Activated CD4-positive, alpha-beta memory T cell treated with anti-CD3 and anti-CD28 coated beads for 36 hours (primary cell): ENCODE measurements at regions of chr1 and their contacts with region 1.

Region 1: DNA sequence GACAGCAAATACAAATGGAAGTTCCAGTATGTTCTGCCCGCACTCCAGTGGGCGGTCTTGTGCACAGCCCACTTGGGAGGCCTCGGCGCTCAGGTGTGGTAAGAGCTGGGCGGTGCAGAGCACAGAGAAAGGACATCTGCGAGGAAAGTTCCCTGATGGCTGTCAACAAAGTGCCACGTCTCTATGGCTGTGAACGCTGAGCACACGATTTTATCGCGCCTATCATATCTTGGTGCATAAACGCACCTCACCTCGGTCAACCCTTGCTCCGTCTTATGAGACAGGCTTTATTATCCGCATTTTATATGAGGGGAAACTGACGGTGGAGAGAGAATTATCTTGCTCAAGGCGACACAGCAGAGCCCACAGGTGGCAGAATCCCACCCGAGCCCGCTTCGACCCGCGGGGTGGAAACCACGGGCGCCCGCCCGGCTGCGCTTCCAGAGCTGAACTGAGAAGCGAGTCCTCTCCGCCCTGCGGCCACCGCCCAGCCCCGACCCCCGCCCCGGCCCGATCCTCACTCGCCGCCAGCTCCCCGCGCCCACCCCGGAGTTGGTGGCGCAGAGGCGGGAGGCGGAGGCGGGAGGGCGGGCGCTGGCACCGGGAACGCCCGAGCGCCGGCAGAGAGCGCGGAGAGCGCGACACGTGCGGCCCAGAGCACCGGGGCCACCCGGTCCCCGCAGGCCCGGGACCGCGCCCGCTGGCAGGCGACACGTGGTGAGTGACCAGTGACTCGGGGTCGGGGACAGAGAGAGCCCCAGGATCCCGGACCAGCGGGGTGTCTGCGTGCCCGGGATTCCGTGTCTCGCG is at the start of gene IL12RB2:
- DNase-seq: peak; percentile 75
- H3K4me3 Mint-ChIP-seq: peak within 1 kb of the TSS; percentile 95
- H3K27ac Mint-ChIP-seq: peak within 1 kb of the TSS; percentile 96
- H3K4me1 Mint-ChIP-seq: peaks cover 52% of the 10 kb centered on the region
- H3K27me3 Mint-ChIP-seq: peaks cover 2% of the 10 kb centered on the region
- total RNA-seq, gene IL12RB2: 86.9 to 90.7 TPM

Region 2: GRCh38 chr1:66929999-66930822 is 377.2 kb before region 1 on chr1:
- CTCF ChIA-PET with region 1: no interaction called
- POLR2A ChIA-PET with region 1: interaction called, 3 read pairs
- intact Hi-C with region 1: loop called (anchors 10 kb)
- DNase-seq: peak; percentile 96
- H3K4me3 Mint-ChIP-seq: peak overlapping the region; percentile 90
- H3K27ac Mint-ChIP-seq: peak overlapping the region; percentile 96
- H3K4me1 Mint-ChIP-seq: peaks cover 57% of the 10 kb centered on the region
- H3K27me3 Mint-ChIP-seq: no peaks in the 10 kb centered on the region

Region 3: GRCh38 chr1:67162957-67163356 is 144.5 kb before region 1 on chr1:
- CTCF ChIA-PET with region 1: no interaction called
- POLR2A ChIA-PET with region 1: interaction called, 4 read pairs
- intact Hi-C with region 1: loop called (anchors 1 kb)
- DNase-seq: peak; percentile 78
- H3K4me3 Mint-ChIP-seq: peak overlapping the region; percentile 30
- H3K27ac Mint-ChIP-seq: peak overlapping the region; percentile 73
- H3K4me1 Mint-ChIP-seq: peaks cover 56% of the 10 kb centered on the region
- H3K27me3 Mint-ChIP-seq: peaks cover 5% of the 10 kb centered on the region

Region 4: DNA sequence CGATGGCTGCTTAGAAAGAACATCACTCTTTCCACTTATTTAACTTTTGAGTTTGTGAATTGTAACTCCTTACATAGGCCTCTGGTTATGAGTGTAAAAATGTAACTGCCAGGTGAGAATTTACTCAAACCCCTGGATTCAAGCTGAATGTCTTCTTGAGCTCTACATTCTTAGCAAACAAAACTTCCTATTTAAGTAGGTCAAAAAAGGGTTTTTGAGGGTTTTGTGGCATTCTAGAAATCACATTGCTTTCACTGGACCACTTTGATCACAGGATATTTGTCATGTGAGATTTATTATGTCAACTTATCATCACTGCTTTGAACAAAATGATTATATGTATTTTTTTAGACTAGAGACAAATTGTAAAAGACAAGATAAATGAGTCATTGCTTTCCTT is 135.5 kb before region 1 on chr1:
- CTCF ChIA-PET with region 1: no interaction called
- POLR2A ChIA-PET with region 1: interaction called, 4 read pairs
- intact Hi-C with region 1: loop called (anchors 1 kb)
- DNase-seq: no peak
- H3K4me3 Mint-ChIP-seq: peak overlapping the region; percentile 74
- H3K27ac Mint-ChIP-seq: peak overlapping the region; percentile 99
- H3K4me1 Mint-ChIP-seq: peaks cover 72% of the 10 kb centered on the region
- H3K27me3 Mint-ChIP-seq: peaks cover 5% of the 10 kb centered on the region

Region 5: GRCh38 chr1:67194209-67194863 is 113.1 kb before region 1 on chr1:
- CTCF ChIA-PET with region 1: no interaction called
- POLR2A ChIA-PET with region 1: interaction called, 6 read pairs
- intact Hi-C with region 1: loop called (anchors 1 kb)
- DNase-seq: no peak
- H3K4me3 Mint-ChIP-seq: no peak overlapping the region
- H3K27ac Mint-ChIP-seq: peak overlapping the region; percentile 79
- H3K4me1 Mint-ChIP-seq: peaks cover 28% of the 10 kb centered on the region
- H3K27me3 Mint-ChIP-seq: peaks cover 5% of the 10 kb centered on the region

Region 6: GRCh38 chr1:67227196-67227595 is 80.3 kb before region 1 on chr1:
- CTCF ChIA-PET with region 1: no interaction called
- POLR2A ChIA-PET with region 1: no interaction called
- intact Hi-C with region 1: no loop called
- DNase-seq: no peak
- H3K4me3 Mint-ChIP-seq: no peak overlapping the region
- H3K27ac Mint-ChIP-seq: no peak overlapping the region
- H3K4me1 Mint-ChIP-seq: peaks cover 6% of the 10 kb centered on the region
- H3K27me3 Mint-ChIP-seq: peaks cover 1% of the 10 kb centered on the region

Region 7: GRCh38 chr1:67285780-67286488 is 21.5 kb before region 1 on chr1:
- CTCF ChIA-PET with region 1: no interaction called
- POLR2A ChIA-PET with region 1: no interaction called
- intact Hi-C with region 1: loop called (anchors 1 kb)
- DNase-seq: no peak
- H3K4me3 Mint-ChIP-seq: no peak overlapping the region
- H3K27ac Mint-ChIP-seq: peak overlapping the region; percentile 41
- H3K4me1 Mint-ChIP-seq: peaks cover 26% of the 10 kb centered on the region
- H3K27me3 Mint-ChIP-seq: peaks cover 2% of the 10 kb centered on the region